Panc1 (cell line): ENCODE measurements at regions of chr5 and their contacts with region 1.

Region 1: DNA sequence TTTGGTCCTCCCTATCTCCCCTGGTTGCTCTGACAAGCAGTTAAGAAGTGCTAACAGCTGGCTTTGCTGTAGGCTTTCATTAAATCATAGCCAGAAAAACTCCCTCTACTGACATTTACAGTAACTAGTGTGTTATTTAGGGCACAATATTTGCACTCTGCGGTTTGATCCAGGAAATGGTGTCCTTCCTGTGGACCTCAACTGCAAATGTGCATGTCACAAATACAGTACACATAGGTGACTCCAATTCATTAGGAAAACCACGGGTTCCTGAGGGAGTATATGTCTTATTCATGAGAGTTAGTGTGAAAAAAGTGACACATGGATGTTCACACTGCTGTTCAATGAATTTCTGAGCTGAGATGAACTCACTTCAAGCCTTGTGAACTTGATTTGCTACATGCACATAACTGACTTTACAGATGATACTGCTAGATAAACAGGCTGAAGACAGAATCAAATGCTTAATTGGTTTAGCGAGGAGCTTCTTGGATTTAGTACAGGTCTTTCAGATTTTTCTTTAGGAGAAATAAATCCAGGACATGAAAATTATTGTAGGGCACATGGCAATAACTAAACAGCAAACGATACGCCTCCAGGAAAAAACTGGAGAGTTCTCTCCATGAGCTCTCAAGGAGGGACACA is 281.5 kb downstream of the EFNA5 start:
- DNase-seq: peak; percentile 87
- ATAC-seq: peak; percentile 87
- H3K4me3 ChIP-seq: no peak overlapping the region; a peak in 1 of 4 replicates
- H3K27ac ChIP-seq: peak overlapping the region; percentile 72
- H3K4me1 ChIP-seq: peaks cover 28% of the 10 kb centered on the region
- H3K27me3 ChIP-seq: no peaks in the 10 kb centered on the region
- CTCF ChIP-seq: peak; percentile 25; the same call in 1 of the 2 replicates

Region 2: DNA sequence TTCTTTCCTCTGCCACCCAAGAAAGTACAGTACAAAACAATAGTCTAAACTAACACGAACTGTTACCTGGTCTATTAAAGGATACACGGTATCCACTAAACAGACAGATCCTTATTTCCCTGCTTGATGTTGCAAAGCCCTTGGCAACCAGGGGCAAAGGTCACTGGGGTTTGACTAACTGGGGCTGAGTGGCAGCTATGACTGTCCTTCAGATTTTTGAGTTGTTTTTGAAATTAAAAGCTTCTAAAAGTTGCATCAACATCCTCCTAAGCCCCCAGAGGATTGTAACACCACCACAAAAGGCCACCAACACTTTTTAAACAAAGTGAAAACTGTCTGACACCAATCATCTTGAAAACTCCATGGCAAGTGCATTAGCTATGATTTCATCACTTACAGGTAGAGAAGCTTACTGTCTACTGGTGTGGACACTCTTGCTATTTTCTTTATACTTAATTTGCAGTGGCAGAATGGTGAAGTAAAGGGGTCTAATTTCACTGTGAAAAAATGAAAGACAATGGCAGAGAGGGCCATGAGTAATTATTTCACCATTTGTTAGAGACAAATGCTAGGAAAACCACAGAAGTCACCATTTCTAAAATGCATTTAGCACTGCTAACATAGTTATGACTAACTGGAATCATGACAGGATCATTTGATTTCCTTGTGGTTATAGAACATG is 10.9 kb before region 1 on chr5:
- CTCF ChIA-PET with region 1: no interaction called
- POLR2A ChIA-PET with region 1: interaction called, 13 read pairs
- in situ Hi-C with region 1: no loop called
- intact Hi-C with region 1: no loop called
- DNase-seq: no peak
- ATAC-seq: no peak
- H3K4me3 ChIP-seq: no peak overlapping the region
- H3K27ac ChIP-seq: no peak overlapping the region
- H3K4me1 ChIP-seq: peaks cover 11% of the 10 kb centered on the region
- H3K27me3 ChIP-seq: no peaks in the 10 kb centered on the region
- CTCF ChIP-seq: no peak

Region 3: DNA sequence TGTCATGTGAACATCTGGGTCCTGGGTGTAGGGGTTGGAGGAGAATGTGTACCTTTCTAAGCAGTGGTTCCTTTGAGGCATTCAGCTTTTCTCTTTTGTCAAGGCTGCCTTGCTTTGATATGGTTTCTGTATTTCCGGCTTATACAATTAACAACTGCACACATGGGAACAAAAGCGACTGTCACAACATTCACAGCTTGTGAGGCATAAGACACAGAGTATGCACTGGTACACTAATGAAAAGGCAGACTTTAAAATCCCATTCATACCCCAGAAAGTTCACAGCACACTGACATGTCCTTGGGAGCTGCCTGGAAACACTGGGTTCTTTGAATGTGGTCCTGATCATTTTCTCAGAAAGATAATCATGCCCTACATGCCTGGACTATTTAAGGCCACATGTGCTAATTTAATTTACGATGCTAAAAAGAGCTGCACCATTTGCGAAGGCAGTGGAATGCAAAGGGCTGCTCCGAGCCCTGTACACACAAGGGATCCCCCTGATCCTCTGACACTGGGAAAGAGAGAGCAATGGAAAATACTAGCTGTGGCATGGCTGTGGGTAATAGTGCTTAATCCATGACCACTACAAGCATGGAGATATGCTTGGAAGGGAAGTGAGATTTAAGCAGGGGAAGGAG is 149.7 kb after region 1 on chr5:
- CTCF ChIA-PET with region 1: no interaction called
- POLR2A ChIA-PET with region 1: no interaction called
- in situ Hi-C with region 1: no loop called
- intact Hi-C with region 1: no loop called
- DNase-seq: no peak
- ATAC-seq: no peak
- H3K4me3 ChIP-seq: no peak overlapping the region
- H3K27ac ChIP-seq: no peak overlapping the region
- H3K4me1 ChIP-seq: peaks cover 19% of the 10 kb centered on the region
- H3K27me3 ChIP-seq: no peaks in the 10 kb centered on the region
- CTCF ChIP-seq: no peak